ENCODE measurements at regions of chr20 and their contacts with region 1.

Region 1: GRCh38 chr20:33663161-33664094 is 1.3 kb downstream of the C20orf144 start:
- DNase-seq: peak; percentile 87

Region 2: GRCh38 chr20:33653218-33653899 is 10.1 kb before region 1 on chr20:
- CTCF ChIA-PET with region 1: interaction called, 4 read pairs
- POLR2A ChIA-PET with region 1: interaction called, 23 read pairs
- DNase-seq: peak; percentile 82

Region 3: GRCh38 chr20:33674295-33675135 is 11.1 kb after region 1 on chr20 and contains the start of gene NECAB3:
- CTCF ChIA-PET with region 1: no interaction called
- POLR2A ChIA-PET with region 1: interaction called, 20 read pairs
- DNase-seq: peak; percentile 90

Region 4: DNA sequence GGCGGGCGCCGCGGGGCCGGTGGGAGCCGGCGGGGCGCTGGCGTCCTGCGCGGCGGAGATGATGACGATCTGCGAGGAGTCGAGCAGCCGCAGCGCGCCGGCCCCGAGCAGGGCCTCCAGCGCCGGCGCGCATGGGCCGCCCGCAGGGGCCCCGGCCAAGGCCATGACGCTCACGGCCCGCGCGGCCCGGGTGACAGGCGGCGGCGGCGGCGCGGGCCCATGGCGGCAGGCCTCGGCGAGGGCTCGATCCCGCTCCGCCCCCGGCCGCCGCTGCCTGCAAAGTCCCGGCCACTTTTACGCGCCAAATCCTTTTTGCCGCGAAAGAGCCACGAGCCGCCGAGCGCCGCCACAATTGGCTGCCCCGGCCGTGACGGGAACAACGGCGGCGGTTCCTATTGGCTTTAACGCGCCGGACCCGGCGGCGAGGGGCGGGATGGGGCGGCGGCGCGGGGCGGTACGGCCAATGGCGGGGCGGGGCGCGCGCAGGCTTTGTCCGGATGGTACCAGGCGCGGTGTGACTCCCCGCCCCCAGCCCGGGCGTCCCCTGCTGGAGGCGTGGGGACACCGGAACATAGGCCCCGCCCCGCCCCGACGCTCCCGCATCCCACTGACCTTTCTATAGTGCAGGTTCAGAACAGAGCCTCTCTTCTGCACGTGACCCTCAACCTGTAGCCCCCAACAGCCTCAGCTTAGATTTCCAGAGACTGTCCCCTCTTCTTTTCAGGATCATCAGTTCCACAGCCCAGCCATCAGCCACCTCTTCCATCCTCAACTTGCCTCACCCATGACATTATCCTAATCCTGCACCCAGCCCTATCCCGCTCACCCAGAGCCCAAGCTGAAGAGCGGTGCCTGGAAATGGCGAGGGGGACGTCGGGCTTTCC is 22.9 kb after region 1 on chr20 and contains the start of gene E2F1:
- CTCF ChIA-PET with region 1: no interaction called
- POLR2A ChIA-PET with region 1: interaction called, 20 read pairs
- DNase-seq: peak; percentile 95

Region 5: DNA sequence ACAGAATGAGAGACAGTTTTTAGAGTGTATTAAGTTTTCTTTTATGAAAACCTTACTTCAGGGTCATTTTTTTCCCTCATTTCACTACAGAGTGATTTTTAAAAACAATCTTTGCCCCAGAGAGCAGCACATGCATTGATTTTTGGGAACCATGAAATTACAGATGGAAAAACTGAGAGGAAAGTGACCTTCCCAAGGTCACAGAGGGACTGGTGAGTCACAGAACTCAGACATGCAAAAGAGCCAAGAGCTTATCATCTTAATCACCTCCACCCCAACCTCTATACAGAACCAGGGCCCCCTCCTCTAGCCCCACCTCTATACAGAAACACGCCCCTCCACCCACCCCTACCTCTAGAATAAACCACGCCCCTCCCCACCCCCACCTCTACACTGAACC is 46.0 kb after region 1 on chr20:
- CTCF ChIA-PET with region 1: no interaction called
- POLR2A ChIA-PET with region 1: no interaction called
- DNase-seq: no peak